PC-3 (cell line): ENCODE measurements at regions of chr2 and their contacts with region 1.

Region 1: GRCh38 chr2:149597668-149598326 is 10.2 kb upstream of the MMADHC start:
- DNase-seq: peak; percentile 94
- ATAC-seq: peak; percentile 77
- H3K4me3 ChIP-seq: peak overlapping the region; percentile 59
- H3K27ac ChIP-seq: peak overlapping the region; percentile 83
- H3K4me1 ChIP-seq: peaks cover 41% of the 10 kb centered on the region
- H3K27me3 ChIP-seq: no peaks in the 10 kb centered on the region
- CTCF ChIP-seq: peak; percentile 90

Region 2: GRCh38 chr2:149544692-149545091 is 53.1 kb before region 1 on chr2:
- CTCF ChIA-PET with region 1: no interaction called
- POLR2A ChIA-PET with region 1: no interaction called
- intact Hi-C with region 1: no loop called
- DNase-seq: no peak
- ATAC-seq: no peak
- H3K4me3 ChIP-seq: no peak overlapping the region
- H3K27ac ChIP-seq: no peak overlapping the region
- H3K4me1 ChIP-seq: peaks cover 4% of the 10 kb centered on the region; the same call in 1 of the 2 replicates
- H3K27me3 ChIP-seq: no peaks in the 10 kb centered on the region
- CTCF ChIP-seq: no peak

Region 3: GRCh38 chr2:149692961-149693396 is 95.2 kb after region 1 on chr2:
- CTCF ChIA-PET with region 1: no interaction called
- POLR2A ChIA-PET with region 1: no interaction called
- intact Hi-C with region 1: no loop called
- DNase-seq: no peak
- ATAC-seq: no peak
- H3K4me3 ChIP-seq: no peak overlapping the region
- H3K27ac ChIP-seq: no peak overlapping the region
- H3K4me1 ChIP-seq: no peaks in the 10 kb centered on the region
- H3K27me3 ChIP-seq: no peaks in the 10 kb centered on the region
- CTCF ChIP-seq: no peak

Region 4: GRCh38 chr2:149767516-149767974 is 169.7 kb after region 1 on chr2:
- CTCF ChIA-PET with region 1: no interaction called
- POLR2A ChIA-PET with region 1: no interaction called
- intact Hi-C with region 1: loop called (anchors 2 kb)
- DNase-seq: peak; percentile 47
- ATAC-seq: peak; percentile 35
- H3K4me3 ChIP-seq: peak overlapping the region; percentile 5; the same call in 1 of the 2 replicates
- H3K27ac ChIP-seq: peak overlapping the region; percentile 63
- H3K4me1 ChIP-seq: peaks cover 50% of the 10 kb centered on the region
- H3K27me3 ChIP-seq: no peaks in the 10 kb centered on the region
- CTCF ChIP-seq: no peak

Region 5: DNA sequence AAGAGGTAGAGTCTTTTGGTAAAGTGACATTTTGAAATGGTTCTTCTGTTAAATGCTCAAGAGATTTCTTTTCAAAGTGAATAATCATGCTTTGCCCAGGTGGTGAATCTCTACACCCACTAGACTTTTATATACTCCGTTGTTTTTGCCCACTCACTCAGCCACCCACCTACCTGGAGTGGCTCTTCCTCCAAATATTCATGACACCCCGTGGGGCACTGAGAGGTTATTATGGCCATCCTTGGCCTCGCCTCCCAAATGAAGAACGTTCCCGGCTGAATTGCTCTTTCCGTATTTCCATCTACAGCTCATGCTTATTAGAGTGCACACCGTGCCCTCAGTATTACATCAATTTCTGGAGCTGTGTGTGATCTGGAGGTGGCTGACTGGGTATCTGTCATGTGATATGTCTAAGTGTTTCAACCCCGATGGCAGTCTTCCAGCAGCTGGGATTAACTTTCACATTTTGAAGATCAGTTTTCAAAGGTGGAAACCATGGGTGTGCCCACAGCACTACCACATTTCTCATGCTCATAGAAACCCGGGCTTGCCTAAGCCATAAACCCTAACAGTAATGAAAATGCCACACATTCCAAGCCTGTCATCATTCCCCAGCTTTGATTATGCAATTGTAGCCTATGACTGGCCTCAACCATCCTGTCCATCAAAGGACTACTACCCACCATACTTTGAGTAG is 396.4 kb after region 1 on chr2:
- CTCF ChIA-PET with region 1: no interaction called
- POLR2A ChIA-PET with region 1: no interaction called
- intact Hi-C with region 1: loop called (anchors 2 kb)
- DNase-seq: peak; percentile 98
- ATAC-seq: peak; percentile 59
- H3K4me3 ChIP-seq: no peak overlapping the region
- H3K27ac ChIP-seq: peak overlapping the region; percentile 45
- H3K4me1 ChIP-seq: peaks cover 56% of the 10 kb centered on the region
- H3K27me3 ChIP-seq: no peaks in the 10 kb centered on the region
- CTCF ChIP-seq: no peak

Region 6: DNA sequence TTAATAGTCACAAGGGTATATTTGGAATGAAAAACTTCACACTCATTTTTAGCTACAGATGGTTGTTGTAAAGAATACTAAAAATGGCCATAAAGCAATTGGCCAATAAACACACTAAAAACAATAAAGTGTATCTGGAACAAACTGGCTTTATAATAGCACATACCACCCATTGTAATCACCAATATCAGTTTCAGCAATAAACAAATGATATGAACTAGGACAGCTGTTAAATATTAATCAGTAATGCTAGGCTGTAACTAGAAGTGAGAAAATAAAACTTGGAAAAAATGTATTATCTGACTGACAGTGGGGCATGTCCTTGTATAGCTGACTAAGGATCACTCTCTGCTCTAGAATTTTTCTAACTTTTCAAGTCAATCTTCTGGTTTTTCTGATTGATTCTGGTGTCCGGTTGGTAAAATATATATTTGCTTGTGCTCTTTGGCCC is 577.2 kb after region 1 on chr2:
- CTCF ChIA-PET with region 1: no interaction called
- POLR2A ChIA-PET with region 1: no interaction called
- intact Hi-C with region 1: loop called (anchors 2 kb)
- DNase-seq: no peak
- ATAC-seq: peak; percentile 16
- H3K4me3 ChIP-seq: no peak overlapping the region
- H3K27ac ChIP-seq: peak overlapping the region; percentile 66
- H3K4me1 ChIP-seq: peaks cover 27% of the 10 kb centered on the region
- H3K27me3 ChIP-seq: no peaks in the 10 kb centered on the region
- CTCF ChIP-seq: no peak

Region 7: GRCh38 chr2:150478200-150478974 is 880.6 kb after region 1 on chr2:
- CTCF ChIA-PET with region 1: no interaction called
- POLR2A ChIA-PET with region 1: no interaction called
- intact Hi-C with region 1: loop called (anchors 2 kb)
- DNase-seq: peak; percentile 91
- ATAC-seq: peak; percentile 20
- H3K4me3 ChIP-seq: peak overlapping the region; percentile 58
- H3K27ac ChIP-seq: peak overlapping the region; percentile 98
- H3K4me1 ChIP-seq: peaks cover 98% of the 10 kb centered on the region
- H3K27me3 ChIP-seq: no peaks in the 10 kb centered on the region
- CTCF ChIP-seq: no peak

Region 8: DNA sequence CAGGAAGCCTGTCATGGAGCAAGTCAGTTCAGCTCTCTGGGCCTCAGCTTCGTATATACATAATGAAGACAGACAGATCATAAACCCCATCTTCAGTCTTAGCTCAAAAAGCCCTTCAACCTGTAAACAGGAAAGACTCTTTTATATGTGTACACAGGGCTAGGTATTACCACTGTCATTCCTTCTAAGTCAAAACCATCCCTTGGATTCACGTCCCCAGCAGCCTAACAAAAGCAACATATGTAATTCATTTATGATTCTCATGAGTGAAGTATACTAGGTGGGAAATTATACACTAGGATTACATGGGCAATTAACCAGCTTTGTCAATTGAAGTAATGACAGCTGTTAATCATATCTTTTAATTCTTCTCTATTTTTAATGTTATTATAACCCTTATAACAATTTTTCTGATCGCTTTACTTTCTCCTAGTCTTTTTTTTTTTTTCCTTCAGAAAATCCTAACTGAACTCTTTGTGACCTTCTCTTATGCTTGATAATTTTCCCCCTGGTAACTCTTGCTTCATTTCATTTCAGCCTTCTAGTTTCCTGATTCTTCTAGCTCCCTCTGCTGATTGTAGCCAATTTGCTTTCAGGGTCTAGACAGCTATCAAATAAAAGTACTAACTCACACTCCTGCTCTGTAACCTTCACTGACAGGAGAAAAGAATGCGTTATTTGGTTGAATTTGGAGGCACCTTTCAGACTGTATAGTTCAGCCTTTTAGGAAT is 1564.2 kb after region 1 on chr2:
- CTCF ChIA-PET with region 1: no interaction called
- POLR2A ChIA-PET with region 1: no interaction called
- intact Hi-C with region 1: loop called (anchors 5 kb)
- DNase-seq: peak; percentile 51
- ATAC-seq: peak; percentile 70
- H3K4me3 ChIP-seq: no peak overlapping the region
- H3K27ac ChIP-seq: no peak overlapping the region
- H3K4me1 ChIP-seq: no peaks in the 10 kb centered on the region
- H3K27me3 ChIP-seq: no peaks in the 10 kb centered on the region
- CTCF ChIP-seq: peak; percentile 60